Mammary epithelial cell (primary cell): ENCODE measurements at regions of chr16 and their contacts with region 1.

Region 1: DNA sequence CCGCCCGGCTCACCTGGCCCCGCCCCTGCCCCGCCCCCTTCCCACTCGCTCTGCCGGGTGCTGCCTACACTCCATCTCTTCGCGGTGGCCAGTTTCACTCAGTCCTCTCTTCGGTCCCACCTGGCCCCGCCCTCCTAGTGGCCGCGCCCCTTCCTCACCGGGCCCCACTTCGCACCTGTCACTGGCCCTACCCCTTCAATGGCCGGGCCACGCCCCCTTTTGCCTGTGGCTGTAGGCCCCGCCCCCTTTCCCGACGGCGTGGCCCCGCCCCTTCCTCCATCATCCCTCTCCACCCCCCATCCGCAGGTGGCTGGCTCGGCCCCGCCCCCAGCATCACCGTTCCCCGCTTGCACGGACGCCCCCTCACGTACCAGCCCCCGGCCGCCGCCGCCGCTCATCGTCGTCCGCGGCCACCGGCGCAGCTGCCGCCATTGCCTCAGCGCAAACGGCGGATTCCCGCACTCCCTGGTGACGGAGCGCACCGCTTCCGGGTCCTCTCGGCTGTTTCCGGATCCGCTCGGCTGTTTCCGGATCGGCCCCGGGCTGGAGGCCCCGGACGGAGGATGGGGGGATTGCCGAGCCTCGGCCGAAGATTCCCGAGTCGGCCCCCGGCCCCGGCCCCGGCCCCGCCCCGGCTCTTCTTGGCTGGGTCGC is at the start of gene RABEP2:
- DNase-seq: peak; percentile 97
- H3K4me3 ChIP-seq: peak within 1 kb of the TSS; percentile 57 to 95 (median 83)
- H3K27ac ChIP-seq: peak within 1 kb of the TSS; percentile 73
- H3K4me1 ChIP-seq: peaks cover 11% of the 10 kb centered on the region
- H3K27me3 ChIP-seq: no peaks in the 10 kb centered on the region
- CTCF ChIP-seq: no peak
- total RNA-seq, gene RABEP2: 24.2 to 25.4 TPM

Region 2: GRCh38 chr16:28835867-28836744 is 88.8 kb before region 1 on chr16:
- CTCF ChIA-PET with region 1: no interaction called
- dilution Hi-C with region 1: no loop called
- in situ Hi-C with region 1: no loop called
- intact Hi-C with region 1: no loop called
- DNase-seq: no peak
- H3K4me3 ChIP-seq: no peak overlapping the region
- H3K27ac ChIP-seq: no peak overlapping the region
- H3K4me1 ChIP-seq: no peaks in the 10 kb centered on the region
- H3K27me3 ChIP-seq: no peaks in the 10 kb centered on the region
- CTCF ChIP-seq: no peak

Region 3: GRCh38 chr16:28846080-28846932 is 78.6 kb before region 1 on chr16 and contains the start of gene TUFM:
- CTCF ChIA-PET with region 1: no interaction called
- dilution Hi-C with region 1: no loop called
- in situ Hi-C with region 1: no loop called
- intact Hi-C with region 1: loop called (anchors 2 kb)
- DNase-seq: peak; percentile 98
- H3K4me3 ChIP-seq: peak within 1 kb of the TSS; percentile 69 to 92 (median 89)
- H3K27ac ChIP-seq: peak within 1 kb of the TSS; percentile 59
- H3K4me1 ChIP-seq: peaks cover 9% of the 10 kb centered on the region
- H3K27me3 ChIP-seq: no peaks in the 10 kb centered on the region
- CTCF ChIP-seq: peak; percentile 50 to 59
- total RNA-seq, gene TUFM: 94.9 to 142 TPM

Region 4: DNA sequence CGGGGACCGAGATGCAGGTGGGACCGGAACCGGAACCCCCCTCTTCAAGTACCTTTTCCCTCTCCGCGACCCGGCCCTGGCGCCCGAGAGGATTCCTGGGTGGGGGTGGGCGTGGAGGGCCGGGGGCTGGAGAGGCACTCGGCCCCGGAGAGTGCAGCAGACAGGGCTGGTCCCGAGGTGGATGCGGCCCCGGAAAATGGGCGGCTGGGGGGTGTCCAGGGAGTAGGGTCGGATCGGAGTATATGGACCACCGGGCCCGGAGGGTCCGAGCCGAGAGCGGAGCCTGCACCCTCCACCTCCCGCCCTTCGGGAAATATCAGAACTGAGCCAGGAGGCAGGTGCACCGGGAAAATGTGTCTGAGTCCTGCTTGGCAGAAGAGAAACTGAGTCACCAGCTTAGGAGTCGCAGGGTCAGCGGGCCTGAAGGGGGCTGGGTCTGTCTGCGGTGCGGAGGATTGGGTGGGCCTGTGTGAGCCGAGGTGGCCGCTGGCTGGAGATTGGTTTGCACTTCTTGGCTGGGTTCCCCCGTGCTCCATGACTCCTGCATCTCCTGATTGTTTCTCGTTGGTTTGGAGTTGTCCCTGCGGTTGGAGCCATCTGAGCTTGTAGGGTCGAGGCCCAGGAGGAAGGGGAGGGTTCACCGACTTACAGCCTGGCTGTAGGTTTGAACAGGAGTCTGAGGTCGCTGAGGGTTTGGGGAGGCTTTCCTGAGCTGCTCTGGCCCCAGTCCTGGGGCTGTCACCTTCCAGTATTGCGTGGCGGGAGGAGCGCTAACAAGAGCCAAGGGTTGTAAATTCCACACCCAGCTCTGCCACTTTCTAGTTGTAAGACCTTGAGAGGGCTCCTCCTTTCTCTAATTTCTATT is 60.7 kb before region 1 on chr16:
- CTCF ChIA-PET with region 1: no interaction called
- dilution Hi-C with region 1: no loop called
- in situ Hi-C with region 1: loop called in 1 of 2 experiments (anchors 10 kb)
- intact Hi-C with region 1: loop called (anchors 1 kb)
- DNase-seq: peak; percentile 29
- H3K4me3 ChIP-seq: peak overlapping the region; percentile 70 to 99 (median 75)
- H3K27ac ChIP-seq: peak overlapping the region; percentile 76
- H3K4me1 ChIP-seq: peaks cover 9% of the 10 kb centered on the region
- H3K27me3 ChIP-seq: no peaks in the 10 kb centered on the region
- CTCF ChIP-seq: no peak

Region 5: GRCh38 chr16:28879841-28880588 is 44.8 kb before region 1 on chr16:
- CTCF ChIA-PET with region 1: no interaction called
- dilution Hi-C with region 1: no loop called
- in situ Hi-C with region 1: no loop called
- intact Hi-C with region 1: loop called (anchors 2 kb)
- DNase-seq: peak; percentile 78
- H3K4me3 ChIP-seq: peak overlapping the region; percentile 49 to 57 (median 57)
- H3K27ac ChIP-seq: no peak overlapping the region
- H3K4me1 ChIP-seq: peaks cover 11% of the 10 kb centered on the region
- H3K27me3 ChIP-seq: no peaks in the 10 kb centered on the region
- CTCF ChIP-seq: no peak

Region 6: DNA sequence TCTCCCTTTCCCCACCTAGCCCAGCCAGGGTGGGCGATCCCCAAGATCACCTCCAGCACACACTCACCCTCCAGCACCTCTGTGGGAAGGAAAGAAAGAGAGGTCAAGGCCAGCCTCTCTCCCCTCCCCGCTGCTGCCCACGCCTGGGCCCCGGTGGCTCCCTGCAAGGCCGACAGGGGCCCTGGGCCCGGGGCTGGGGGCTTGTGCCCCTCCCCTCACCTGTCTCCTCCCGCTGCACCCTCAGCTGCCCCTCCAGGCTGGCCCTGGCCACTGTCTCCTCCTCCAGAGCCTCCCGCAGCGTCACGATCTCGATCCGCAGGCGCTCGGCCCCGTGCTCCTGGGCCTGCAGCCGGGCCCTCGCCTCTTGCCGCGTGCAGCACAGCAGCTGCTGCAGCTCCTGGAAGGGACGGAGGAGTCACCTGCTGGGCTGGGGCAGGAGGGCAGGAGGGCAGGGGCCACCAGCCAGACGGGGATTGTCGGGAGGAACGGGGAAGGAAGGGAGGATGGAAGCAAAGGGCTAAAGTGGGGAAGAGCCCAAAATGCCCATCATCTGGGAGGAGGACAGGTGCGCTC is 19.0 kb before region 1 on chr16:
- CTCF ChIA-PET with region 1: no interaction called
- dilution Hi-C with region 1: no loop called
- in situ Hi-C with region 1: no loop called
- intact Hi-C with region 1: loop called (anchors 1 kb)
- DNase-seq: no peak
- H3K4me3 ChIP-seq: no peak overlapping the region
- H3K27ac ChIP-seq: no peak overlapping the region
- H3K4me1 ChIP-seq: peaks cover 4% of the 10 kb centered on the region
- H3K27me3 ChIP-seq: no peaks in the 10 kb centered on the region
- CTCF ChIP-seq: no peak

Region 7: DNA sequence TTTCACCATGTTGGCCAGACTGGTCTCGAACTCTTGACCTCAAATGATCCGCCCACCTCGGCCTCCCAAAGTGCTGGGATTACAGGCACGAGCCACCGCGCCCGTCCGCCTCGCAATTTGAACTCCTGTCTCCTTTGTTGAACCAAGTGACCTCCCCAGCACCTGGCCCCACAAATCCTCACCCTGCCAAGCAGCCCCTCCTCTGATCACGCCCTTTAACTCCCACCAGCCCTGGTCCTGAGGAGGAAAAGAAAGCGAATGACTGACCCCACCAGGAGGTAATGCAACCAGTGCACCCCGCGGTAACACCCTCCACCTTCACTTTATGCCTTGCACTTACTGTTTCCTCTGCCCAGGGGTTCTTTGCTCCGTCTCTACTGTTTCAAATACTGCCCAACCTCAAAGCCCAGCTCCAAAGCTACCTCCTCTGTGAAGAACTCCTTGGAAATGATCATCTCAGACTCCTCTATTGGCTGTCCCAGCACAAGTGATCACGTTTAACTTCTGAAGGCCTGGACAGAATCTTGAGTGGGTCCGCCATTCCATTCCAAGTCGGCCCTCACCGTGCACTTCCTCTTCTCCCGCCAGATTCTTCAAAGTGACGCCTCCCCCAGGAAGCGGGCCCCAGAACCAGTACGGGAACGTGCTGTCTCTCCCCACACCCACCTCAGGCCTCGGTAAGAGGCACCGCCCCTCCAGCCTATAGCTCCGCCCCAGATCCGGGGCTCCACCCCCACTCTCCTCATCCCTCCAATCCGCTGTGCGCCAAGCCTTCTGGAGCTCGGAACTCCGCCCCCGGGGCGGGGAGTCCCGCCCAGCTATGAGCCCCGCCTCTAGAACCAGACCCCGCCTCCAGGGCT is 11.3 kb after region 1 on chr16:
- CTCF ChIA-PET with region 1: no interaction called
- dilution Hi-C with region 1: no loop called
- in situ Hi-C with region 1: no loop called
- intact Hi-C with region 1: no loop called
- DNase-seq: peak; percentile 38
- H3K4me3 ChIP-seq: no peak overlapping the region
- H3K27ac ChIP-seq: no peak overlapping the region
- H3K4me1 ChIP-seq: no peaks in the 10 kb centered on the region
- H3K27me3 ChIP-seq: no peaks in the 10 kb centered on the region
- CTCF ChIP-seq: no peak

Region 8: GRCh38 chr16:28974437-28975157 is 49.7 kb after region 1 on chr16 and contains the start of gene SPNS1:
- CTCF ChIA-PET with region 1: no interaction called
- dilution Hi-C with region 1: no loop called
- in situ Hi-C with region 1: no loop called
- intact Hi-C with region 1: loop called (anchors 2 kb)
- DNase-seq: peak; percentile 91
- H3K4me3 ChIP-seq: peak within 1 kb of the TSS; percentile 66 to 90 (median 72)
- H3K27ac ChIP-seq: peak within 1 kb of the TSS; percentile 79
- H3K4me1 ChIP-seq: peaks cover 23% of the 10 kb centered on the region
- H3K27me3 ChIP-seq: no peaks in the 10 kb centered on the region
- CTCF ChIP-seq: no peak
- total RNA-seq, gene SPNS1: 24.5 to 32.3 TPM